ENCODE measurements at regions of chr5 and their contacts with region 1.

Region 1: GRCh38 chr5:140718241-140718580 is 18.0 kb downstream of the ZMAT2 start:
- DNase-seq: no peak
- H3K4me3 ChIP-seq: no peak overlapping the region
- H3K27ac ChIP-seq: peak overlapping the region; percentile 60
- H3K4me1 ChIP-seq: peaks cover 6% of the 10 kb centered on the region
- H3K27me3 ChIP-seq: peaks cover 0 to 2% of the 10 kb centered on the region in 2 experiments
- CTCF ChIP-seq: no peak
- POLR2A ChIP-seq: no peak

Region 2: GRCh38 chr5:140357726-140358093 is 360.5 kb before region 1 on chr5:
- CTCF ChIA-PET with region 1: interaction called, 64 read pairs
- POLR2A ChIA-PET with region 1: no interaction called
- dilution Hi-C with region 1: no loop called
- intact Hi-C with region 1: no loop called
- DNase-seq: peak; percentile 88
- H3K4me3 ChIP-seq: no peak overlapping the region
- H3K27ac ChIP-seq: no peak overlapping the region
- H3K4me1 ChIP-seq: no peaks in the 10 kb centered on the region
- H3K27me3 ChIP-seq: no peaks in the 10 kb centered on the region
- CTCF ChIP-seq: peak; percentile 94 to 97
- POLR2A ChIP-seq: no peak

Region 3: DNA sequence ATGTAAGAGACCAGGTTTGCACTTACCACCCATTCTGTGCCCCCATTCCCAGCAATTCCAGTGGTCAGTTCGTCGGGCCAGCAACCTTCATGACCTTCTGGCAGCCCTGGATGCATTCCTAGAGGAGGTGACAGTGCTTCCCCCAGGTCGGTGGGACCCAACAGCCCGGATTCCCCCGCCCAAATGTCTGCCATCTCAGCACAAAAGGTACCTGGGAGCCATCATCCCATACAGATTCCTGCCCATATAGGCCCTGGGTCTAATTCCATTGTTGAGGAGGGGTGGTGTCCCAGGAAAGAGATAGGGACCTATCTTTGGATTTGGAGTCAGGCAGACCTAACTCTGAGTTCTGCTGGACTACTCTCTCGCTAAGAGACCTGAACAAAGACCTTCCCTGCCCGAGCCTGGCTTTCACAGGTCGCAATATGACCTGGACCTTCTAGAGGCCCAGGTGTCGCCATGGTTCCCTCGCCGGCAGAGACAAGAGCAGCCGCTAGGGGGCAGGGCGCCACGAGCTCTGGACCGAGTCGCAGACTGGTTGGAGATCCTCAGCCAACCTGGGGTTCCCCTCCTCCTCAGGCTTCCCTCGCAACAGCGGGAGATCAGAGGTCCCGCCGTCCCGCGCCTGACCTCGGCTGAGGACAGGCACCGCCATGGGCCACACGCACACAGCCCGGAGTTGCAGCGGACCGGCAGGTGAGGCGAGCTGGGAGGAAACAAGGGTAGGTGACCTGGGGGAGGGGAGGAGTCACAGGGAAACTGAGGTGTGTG is 355.2 kb before region 1 on chr5:
- CTCF ChIA-PET with region 1: interaction called, 64 read pairs
- POLR2A ChIA-PET with region 1: no interaction called
- dilution Hi-C with region 1: no loop called
- intact Hi-C with region 1: loop called (anchors 1 kb)
- DNase-seq: peak; percentile 61
- H3K4me3 ChIP-seq: peak overlapping the region in 2 of 3 experiments; percentile 20 to 24
- H3K27ac ChIP-seq: no peak overlapping the region
- H3K4me1 ChIP-seq: peaks cover 3% of the 10 kb centered on the region
- H3K27me3 ChIP-seq: no peaks in the 10 kb centered on the region
- CTCF ChIP-seq: peak; percentile 97 to 98
- POLR2A ChIP-seq: no peak

Region 4: GRCh38 chr5:140481758-140482157 is 236.5 kb before region 1 on chr5:
- CTCF ChIA-PET with region 1: no interaction called
- POLR2A ChIA-PET with region 1: no interaction called
- dilution Hi-C with region 1: no loop called
- intact Hi-C with region 1: no loop called
- DNase-seq: no peak
- H3K4me3 ChIP-seq: no peak overlapping the region
- H3K27ac ChIP-seq: no peak overlapping the region
- H3K4me1 ChIP-seq: peaks cover 26% of the 10 kb centered on the region
- H3K27me3 ChIP-seq: no peaks in the 10 kb centered on the region
- CTCF ChIP-seq: no peak
- POLR2A ChIP-seq: no peak

Region 5: DNA sequence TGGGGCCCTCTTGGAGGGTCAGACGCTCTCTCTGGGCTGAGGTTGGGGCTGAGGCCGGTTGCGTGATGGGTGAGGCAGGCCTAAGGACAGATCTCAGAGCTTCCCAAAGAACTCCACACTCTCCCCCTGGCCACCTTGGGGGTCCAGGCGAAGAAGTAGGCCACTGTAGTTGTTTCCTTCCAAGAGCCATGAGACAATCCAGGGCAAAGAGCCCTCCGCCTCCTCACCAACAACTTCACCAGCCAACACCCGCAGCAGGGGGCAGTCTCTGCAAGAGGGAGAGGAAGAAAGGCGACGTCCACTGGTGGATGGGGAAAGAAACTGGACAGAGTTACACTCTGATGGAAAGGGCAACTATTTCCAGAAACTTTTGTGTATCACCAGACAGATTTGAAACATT is 142.9 kb before region 1 on chr5:
- CTCF ChIA-PET with region 1: interaction called, 3 read pairs
- POLR2A ChIA-PET with region 1: no interaction called
- dilution Hi-C with region 1: no loop called
- intact Hi-C with region 1: loop called (anchors 1 kb)
- DNase-seq: peak; percentile 41
- H3K4me3 ChIP-seq: no peak overlapping the region
- H3K27ac ChIP-seq: no peak overlapping the region
- H3K4me1 ChIP-seq: peaks cover 7% of the 10 kb centered on the region
- H3K27me3 ChIP-seq: peaks cover 0 to 2% of the 10 kb centered on the region in 2 experiments
- CTCF ChIP-seq: peak; percentile 56 to 57
- POLR2A ChIP-seq: no peak

Measured in endothelial cell of umbilical vein (primary cell).